Adrenal gland (tissue), 19 donors: ENCODE measurements at regions of chr6 and their contacts with region 1.

Region 1: GRCh38 chr6:13336553-13336952 is 8.2 kb upstream of the TBC1D7 start:
- DNase-seq: peak in 6 of 7 donors; percentile 71 to 95 (median 82)
- H3K4me3 ChIP-seq: no peak overlapping the region
- H3K27ac ChIP-seq: no peak overlapping the region
- H3K4me1 ChIP-seq: no peaks in the 10 kb centered on the region
- H3K27me3 ChIP-seq: no peaks in the 10 kb centered on the region
- CTCF ChIP-seq: peak; percentile 78 to 94 (median 88)
- POLR2A ChIP-seq: no peak

Region 2: GRCh38 chr6:13079096-13079723 is 257.3 kb before region 1 on chr6:
- intact Hi-C with region 1: no loop called
- DNase-seq: no peak
- H3K4me3 ChIP-seq: no peak overlapping the region
- H3K27ac ChIP-seq: no peak overlapping the region
- H3K4me1 ChIP-seq: no peaks in the 10 kb centered on the region
- H3K27me3 ChIP-seq: no peaks in the 10 kb centered on the region
- CTCF ChIP-seq: no peak
- POLR2A ChIP-seq: no peak

Region 3: GRCh38 chr6:13538084-13538483 is 201.5 kb after region 1 on chr6:
- intact Hi-C with region 1: loop called (anchors 5 kb)
- DNase-seq: peak in 1 of 7 donors; percentile 15
- H3K4me3 ChIP-seq: no peak overlapping the region
- H3K27ac ChIP-seq: no peak overlapping the region
- H3K4me1 ChIP-seq: no peaks in the 10 kb centered on the region
- H3K27me3 ChIP-seq: no peaks in the 10 kb centered on the region
- CTCF ChIP-seq: peak; percentile 17 to 66 (median 48)
- POLR2A ChIP-seq: no peak